WTC11 (cell line): ENCODE measurements at regions of chr1 and their contacts with region 1.

Region 1: GRCh38 chr1:201895913-201896807 is 7.5 kb downstream of the SHISA4 start:
- DNase-seq: peak; percentile 97
- ATAC-seq: peak; percentile 85
- H3K4me3 Mint-ChIP-seq: peak overlapping the region; percentile 37; the same call in 1 of the 2 replicates
- H3K27ac Mint-ChIP-seq: peak overlapping the region; percentile 62
- H3K4me1 Mint-ChIP-seq: peaks cover 35% of the 10 kb centered on the region
- H3K27me3 Mint-ChIP-seq: peaks cover 4% of the 10 kb centered on the region
- CTCF ChIP-seq: peak; percentile 94

Region 2: DNA sequence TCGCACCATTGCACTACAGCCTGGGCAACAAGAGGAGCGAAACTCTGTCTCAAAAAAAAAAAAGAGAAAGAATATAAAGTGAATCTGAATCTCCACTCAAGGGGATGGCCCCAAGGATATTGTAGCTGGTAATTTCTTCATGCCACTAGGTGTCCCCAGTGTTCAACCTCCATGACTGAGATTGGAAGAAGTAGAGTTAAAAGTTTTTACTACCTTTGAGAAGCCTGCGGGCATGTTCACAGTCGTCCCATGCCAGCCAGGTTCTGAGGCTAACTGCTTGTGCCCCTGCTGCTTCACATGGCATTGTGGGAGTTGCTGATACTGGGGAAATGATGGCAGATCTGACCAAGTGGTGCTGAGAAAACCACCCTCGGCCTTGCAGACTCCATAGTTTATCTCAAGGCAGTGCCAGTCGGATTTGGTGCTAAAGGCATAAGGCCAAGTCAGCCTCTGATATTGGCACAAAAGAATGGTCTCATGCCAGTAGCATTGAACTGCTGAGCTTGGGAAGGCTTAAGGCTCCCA is 18.2 kb before region 1 on chr1:
- CTCF ChIA-PET with region 1: interaction called, 135 read pairs
- POLR2A ChIA-PET with region 1: interaction called, 5 read pairs
- DNase-seq: peak; percentile 36
- ATAC-seq: peak; percentile 58
- H3K4me3 Mint-ChIP-seq: no peak overlapping the region
- H3K27ac Mint-ChIP-seq: peak overlapping the region; percentile 85; the same call in 1 of the 2 replicates
- H3K4me1 Mint-ChIP-seq: peaks cover 20% of the 10 kb centered on the region
- H3K27me3 Mint-ChIP-seq: no peaks in the 10 kb centered on the region
- CTCF ChIP-seq: peak; percentile 60; the same call in 1 of the 2 replicates

Region 3: DNA sequence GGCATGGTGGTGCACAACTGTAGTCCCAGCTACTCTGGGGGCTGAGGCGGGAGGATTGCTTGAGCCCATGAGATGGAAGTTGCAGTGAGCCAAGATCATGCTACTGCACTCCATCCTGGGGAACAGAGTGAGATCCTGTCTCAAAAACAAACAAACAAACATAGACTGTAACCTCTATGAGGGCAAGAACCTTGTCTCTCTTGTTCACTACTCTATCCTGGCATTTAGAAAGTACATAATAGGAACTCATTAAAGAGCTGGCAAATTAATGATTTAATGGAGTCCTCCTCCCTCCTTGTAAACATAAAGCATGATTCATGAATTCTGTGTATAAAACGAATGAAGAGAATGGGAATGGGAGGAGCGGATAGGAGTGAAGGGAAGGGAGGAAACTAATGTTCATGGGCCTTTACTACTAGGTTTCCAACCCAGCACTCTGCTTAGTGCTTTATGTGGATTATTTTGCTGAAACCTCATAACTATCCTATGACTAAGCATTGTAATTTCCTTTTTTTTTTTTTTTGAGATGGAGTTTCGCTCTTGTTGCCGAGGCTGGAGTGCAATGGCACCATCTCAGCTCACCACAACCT is 41.6 kb after region 1 on chr1:
- CTCF ChIA-PET with region 1: interaction called, 51 read pairs
- POLR2A ChIA-PET with region 1: interaction called, 14 read pairs
- DNase-seq: no peak
- ATAC-seq: no peak
- H3K4me3 Mint-ChIP-seq: no peak overlapping the region
- H3K27ac Mint-ChIP-seq: no peak overlapping the region
- H3K4me1 Mint-ChIP-seq: peaks cover 9% of the 10 kb centered on the region
- H3K27me3 Mint-ChIP-seq: peaks cover 2% of the 10 kb centered on the region; the same call in 1 of the 2 replicates
- CTCF ChIP-seq: no peak

Region 4: DNA sequence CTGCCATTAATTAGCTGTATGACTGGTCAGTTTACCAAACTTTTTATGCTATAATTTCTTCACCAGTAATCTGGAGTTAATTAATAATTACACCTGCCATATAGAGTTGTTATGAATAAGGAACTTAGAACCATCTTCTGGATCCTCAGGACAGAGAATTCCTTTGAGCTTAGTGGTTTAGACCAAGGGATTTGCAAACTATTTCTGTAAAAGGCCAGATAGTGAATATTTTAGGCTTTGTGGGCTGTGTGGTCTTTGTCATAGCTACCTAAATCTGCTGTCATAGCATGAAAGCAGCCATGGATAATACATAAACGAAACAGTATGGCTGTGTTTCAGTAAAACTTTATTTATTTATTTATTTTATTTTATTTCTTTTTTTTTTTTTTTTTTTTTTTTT is 68.1 kb after region 1 on chr1:
- CTCF ChIA-PET with region 1: interaction called, 13 read pairs
- POLR2A ChIA-PET with region 1: no interaction called
- DNase-seq: no peak
- ATAC-seq: no peak
- H3K4me3 Mint-ChIP-seq: no peak overlapping the region
- H3K27ac Mint-ChIP-seq: no peak overlapping the region
- H3K4me1 Mint-ChIP-seq: no peaks in the 10 kb centered on the region
- H3K27me3 Mint-ChIP-seq: no peaks in the 10 kb centered on the region
- CTCF ChIP-seq: no peak

Region 5: GRCh38 chr1:201999625-202000238 is 103.6 kb after region 1 on chr1:
- CTCF ChIA-PET with region 1: interaction called, 74 read pairs
- POLR2A ChIA-PET with region 1: interaction called, 5 read pairs
- DNase-seq: peak; percentile 42
- ATAC-seq: peak; percentile 96
- H3K4me3 Mint-ChIP-seq: no peak overlapping the region
- H3K27ac Mint-ChIP-seq: no peak overlapping the region; the same call in 1 of the 2 replicates
- H3K4me1 Mint-ChIP-seq: no peaks in the 10 kb centered on the region
- H3K27me3 Mint-ChIP-seq: no peaks in the 10 kb centered on the region
- CTCF ChIP-seq: peak; percentile 83

Region 6: GRCh38 chr1:202122639-202123335 is 226.6 kb after region 1 on chr1 and contains the start of gene GPR37L1:
- CTCF ChIA-PET with region 1: interaction called, 22 read pairs
- POLR2A ChIA-PET with region 1: no interaction called
- DNase-seq: peak; percentile 83
- ATAC-seq: peak; percentile 82
- H3K4me3 Mint-ChIP-seq: no peak within 1 kb of the TSS
- H3K27ac Mint-ChIP-seq: no peak within 1 kb of the TSS
- H3K4me1 Mint-ChIP-seq: peaks cover 9% of the 10 kb centered on the region
- H3K27me3 Mint-ChIP-seq: no peaks in the 10 kb centered on the region; the same call in 1 of the 2 replicates
- CTCF ChIP-seq: no peak
- total RNA-seq, gene GPR37L1: 0.07 to 0.16 TPM (median 0.09 TPM) in 3 replicates